K562 (cell line): ENCODE measurements at regions of chr5 and their contacts with region 1.

Region 1: DNA sequence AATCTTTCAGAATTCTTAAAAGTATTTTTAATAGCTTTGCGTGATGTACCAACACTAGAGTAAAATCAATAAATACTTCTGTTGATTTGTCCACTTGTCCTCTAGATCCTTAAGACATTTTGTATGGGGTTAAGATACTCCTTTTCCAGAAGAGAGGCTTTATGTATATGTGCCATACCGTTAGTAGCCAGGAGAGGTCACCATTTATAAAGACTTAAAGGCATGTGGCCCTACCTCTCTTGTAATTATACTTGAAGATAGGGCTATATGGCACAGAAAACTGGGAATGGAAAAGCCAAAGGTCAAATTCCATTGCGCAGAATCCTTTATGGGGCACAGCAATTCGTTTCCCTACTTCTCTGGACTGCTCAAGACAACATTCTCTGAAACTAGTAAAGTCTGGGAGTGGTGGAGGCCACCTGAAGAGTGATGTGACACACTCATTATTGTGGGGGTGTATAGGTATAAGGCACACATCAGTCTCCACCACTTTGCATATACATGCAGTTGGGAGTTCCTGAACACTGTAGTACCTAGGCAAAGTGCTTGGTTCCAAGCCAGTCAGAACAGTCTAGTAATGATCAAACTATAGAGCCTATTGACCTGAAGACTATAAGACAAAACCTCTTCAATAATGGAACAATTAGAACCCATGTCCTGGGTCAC is 140.1 kb upstream of the FBXL17 start:
- DNase-seq: peak; percentile 51 to 73 (median 52)
- ATAC-seq: peak; percentile 98
- H3K4me3 ChIP-seq: no peak overlapping the region
- H3K27ac ChIP-seq: no peak overlapping the region
- H3K4me1 ChIP-seq: peaks cover 0 to 7% of the 10 kb centered on the region in 2 experiments; a peak in 1 of 5 replicates
- H3K27me3 ChIP-seq: no peaks in the 10 kb centered on the region
- CTCF ChIP-seq: peak; percentile 57 to 81 (median 72); a peak in 5 of 6 replicates
- EP300 ChIP-seq: no peak
- POLR2A ChIP-seq: no peak
- RAD21 ChIP-seq: peak; percentile 91 to 95

Region 2: GRCh38 chr5:108260117-108260857 is 261.7 kb before region 1 on chr5:
- CTCF ChIA-PET with region 1: no interaction called
- POLR2A ChIA-PET with region 1: no interaction called
- in situ Hi-C with region 1: no loop called
- intact Hi-C with region 1: loop called (anchors 5 kb)
- DNase-seq: peak; percentile 65 to 87 (median 69)
- ATAC-seq: peak; percentile 99
- H3K4me3 ChIP-seq: no peak overlapping the region
- H3K27ac ChIP-seq: no peak overlapping the region
- H3K4me1 ChIP-seq: no peaks in the 10 kb centered on the region; a peak in 3 of 5 replicates
- H3K27me3 ChIP-seq: no peaks in the 10 kb centered on the region
- CTCF ChIP-seq: peak; percentile 82 to 91 (median 89)
- EP300 ChIP-seq: no peak
- POLR2A ChIP-seq: no peak
- RAD21 ChIP-seq: peak; percentile 89 to 92

Region 3: GRCh38 chr5:108625654-108626053 is 103.7 kb after region 1 on chr5:
- CTCF ChIA-PET with region 1: no interaction called
- POLR2A ChIA-PET with region 1: no interaction called
- in situ Hi-C with region 1: no loop called
- intact Hi-C with region 1: loop called (anchors 5 kb)
- DNase-seq: no peak
- ATAC-seq: no peak
- H3K4me3 ChIP-seq: no peak overlapping the region
- H3K27ac ChIP-seq: no peak overlapping the region
- H3K4me1 ChIP-seq: no peaks in the 10 kb centered on the region
- H3K27me3 ChIP-seq: peaks cover 0 to 4% of the 10 kb centered on the region in 2 experiments; a peak in 1 of 5 replicates
- CTCF ChIP-seq: no peak
- EP300 ChIP-seq: no peak
- POLR2A ChIP-seq: no peak
- RAD21 ChIP-seq: no peak

Region 4: DNA sequence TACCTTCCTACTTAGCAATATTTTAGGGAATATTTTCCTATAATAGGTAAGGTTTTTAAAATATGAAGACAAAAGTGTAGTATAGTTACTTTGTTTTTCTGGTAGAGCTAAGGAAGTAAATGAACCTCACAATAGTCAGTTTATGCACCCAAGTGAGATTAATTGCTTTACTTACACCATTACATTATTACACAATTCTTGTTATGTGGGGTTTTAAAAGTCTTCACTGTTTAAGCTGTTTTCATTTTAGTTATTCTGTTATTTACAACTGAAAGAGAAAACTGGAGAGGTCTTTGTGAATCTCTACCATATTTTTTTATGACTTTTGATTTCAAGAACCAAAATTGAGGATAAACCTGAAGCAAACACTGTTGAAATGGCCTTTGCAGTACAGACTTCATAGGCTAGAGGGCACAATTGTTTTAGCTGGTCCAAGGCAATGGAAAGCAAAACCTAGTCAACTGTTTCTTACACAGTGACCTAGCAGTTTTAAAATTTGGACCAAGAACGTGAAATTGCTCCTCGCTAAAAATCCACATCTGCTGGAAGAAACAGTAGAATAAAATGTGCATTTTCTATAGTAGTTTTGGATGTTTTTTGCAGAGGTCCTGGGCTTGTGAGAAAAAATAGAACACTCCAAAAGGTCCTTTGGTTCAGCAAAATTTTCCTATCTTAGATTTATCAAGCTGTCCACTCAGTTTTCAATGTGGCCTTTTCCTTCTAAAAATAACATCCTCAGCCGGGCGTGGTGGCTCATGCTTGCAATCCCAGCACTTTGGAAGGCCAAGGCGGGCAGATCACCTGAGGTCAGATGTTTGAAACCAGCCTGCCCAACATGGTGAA is 159.3 kb after region 1 on chr5:
- CTCF ChIA-PET with region 1: no interaction called
- POLR2A ChIA-PET with region 1: no interaction called
- in situ Hi-C with region 1: no loop called
- intact Hi-C with region 1: loop called (anchors 2 kb)
- DNase-seq: peak; percentile 26 to 81 (median 48)
- ATAC-seq: peak; percentile 94
- H3K4me3 ChIP-seq: no peak overlapping the region
- H3K27ac ChIP-seq: 0 out of 3 replicates have a peak overlapping the region, but pooled peaks have one; percentile 43
- H3K4me1 ChIP-seq: peaks cover 0 to 6% of the 10 kb centered on the region in 2 experiments; a peak in 2 of 5 replicates
- H3K27me3 ChIP-seq: no peaks in the 10 kb centered on the region; a peak in 1 of 5 replicates
- CTCF ChIP-seq: peak; percentile 68 to 91 (median 83)
- EP300 ChIP-seq: no peak
- POLR2A ChIP-seq: no peak
- RAD21 ChIP-seq: peak; percentile 95 to 98

Region 5: DNA sequence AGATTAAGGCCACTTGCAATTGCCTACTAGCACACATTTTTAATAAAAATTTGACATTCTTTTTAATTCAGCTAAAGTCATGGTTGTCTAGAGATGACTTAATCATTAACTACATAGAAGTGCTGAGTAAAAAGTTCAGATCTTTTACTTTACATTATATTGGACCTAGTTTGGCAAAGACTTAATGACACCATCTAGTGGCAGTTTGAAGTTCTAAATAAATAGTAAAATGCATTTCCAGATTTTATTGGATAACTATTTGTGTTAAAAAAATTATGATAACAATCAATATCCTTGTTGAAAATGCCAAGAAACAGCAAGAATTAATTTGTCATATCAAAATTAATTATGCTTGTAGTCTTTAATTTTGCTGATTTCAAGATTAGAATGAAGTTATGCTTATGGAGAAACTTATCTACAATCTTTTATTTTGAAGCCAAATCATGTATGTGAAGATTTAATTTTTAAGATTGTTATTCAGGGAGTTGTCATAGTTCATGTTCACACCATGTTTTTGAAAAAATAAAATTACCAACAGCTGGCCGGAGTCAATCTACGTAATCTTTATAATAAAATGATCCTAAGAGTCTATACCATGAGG is 957.4 kb after region 1 on chr5:
- CTCF ChIA-PET with region 1: no interaction called
- POLR2A ChIA-PET with region 1: no interaction called
- in situ Hi-C with region 1: no loop called
- intact Hi-C with region 1: loop called (anchors 10 kb)
- DNase-seq: no peak
- ATAC-seq: no peak
- H3K4me3 ChIP-seq: no peak overlapping the region
- H3K27ac ChIP-seq: no peak overlapping the region
- H3K4me1 ChIP-seq: no peaks in the 10 kb centered on the region
- H3K27me3 ChIP-seq: no peaks in the 10 kb centered on the region; a peak in 2 of 5 replicates
- CTCF ChIP-seq: peak in 1 of 3 experiments; percentile 56; a peak in 2 of 6 replicates
- EP300 ChIP-seq: no peak
- POLR2A ChIP-seq: no peak
- RAD21 ChIP-seq: peak; percentile 27 to 61